AG04449 (cell line): ENCODE measurements at regions of chr16 and their contacts with region 1.

Region 1: GRCh38 chr16:66315210-66315825 is 51.2 kb upstream of the CDH5 start:
- DNase-seq: peak; percentile 4
- H3K4me3 ChIP-seq: no peak overlapping the region
- CTCF ChIP-seq: peak; percentile 93

Region 2: GRCh38 chr16:65684230-65684629 is 631.1 kb before region 1 on chr16:
- CTCF ChIA-PET with region 1: no interaction called
- POLR2A ChIA-PET with region 1: no interaction called
- DNase-seq: no peak
- H3K4me3 ChIP-seq: no peak overlapping the region
- CTCF ChIP-seq: no peak

Region 3: GRCh38 chr16:66270333-66270927 is 44.9 kb before region 1 on chr16:
- CTCF ChIA-PET with region 1: interaction called, 90 read pairs
- POLR2A ChIA-PET with region 1: no interaction called
- DNase-seq: no peak
- H3K4me3 ChIP-seq: peak overlapping the region; percentile 46
- CTCF ChIP-seq: peak; percentile 88

Region 4: GRCh38 chr16:66295761-66296520 is 19.4 kb before region 1 on chr16:
- CTCF ChIA-PET with region 1: interaction called, 16 read pairs
- POLR2A ChIA-PET with region 1: no interaction called
- DNase-seq: no peak
- H3K4me3 ChIP-seq: no peak overlapping the region
- CTCF ChIP-seq: no peak

Region 5: GRCh38 chr16:66344533-66345145 is 29.3 kb after region 1 on chr16:
- CTCF ChIA-PET with region 1: interaction called, 25 read pairs
- POLR2A ChIA-PET with region 1: no interaction called
- DNase-seq: no peak
- H3K4me3 ChIP-seq: no peak overlapping the region
- CTCF ChIP-seq: peak; percentile 50